ENCODE measurements at regions of chr5 and their contacts with region 1.

Region 1: DNA sequence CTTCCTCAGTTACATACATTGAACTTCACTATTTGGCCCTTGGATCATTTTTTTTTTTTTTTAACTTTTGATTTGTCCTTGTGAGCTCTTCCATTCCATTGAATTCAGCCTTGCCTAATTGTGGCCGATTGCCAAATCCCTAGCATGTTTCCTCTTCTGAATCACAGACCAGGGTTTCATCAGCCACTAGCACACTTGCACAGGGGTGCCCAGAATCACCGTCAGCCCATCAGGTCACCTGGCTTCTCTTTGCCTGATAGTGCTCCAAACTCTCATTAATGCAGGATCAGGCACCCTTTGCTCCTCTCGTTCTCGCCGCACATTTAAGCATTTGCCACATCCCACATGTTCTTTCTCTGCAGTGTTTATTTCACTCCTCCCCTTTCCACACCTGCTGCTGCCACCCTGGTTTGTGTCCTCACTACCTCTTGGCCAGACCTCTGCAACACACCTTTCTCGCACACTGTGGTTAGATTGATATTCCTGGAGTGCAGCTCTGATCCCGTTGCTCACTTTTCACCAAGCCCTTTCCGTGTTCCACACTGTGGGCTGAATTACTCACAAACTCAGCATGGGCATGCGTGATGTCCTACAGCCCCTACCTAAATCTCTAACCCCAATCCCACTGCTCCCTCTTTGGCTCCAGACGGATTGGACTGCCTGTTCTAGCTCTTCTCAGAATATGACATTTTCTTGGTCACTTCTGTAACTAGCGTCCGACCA is 9.8 kb downstream of the PIK3R1 start:
- DNase-seq: no peak
- H3K4me3 ChIP-seq: peak overlapping the region; percentile 22 to 87 (median 26)
- H3K27ac ChIP-seq: peak overlapping the region; percentile 54 to 68 (median 62)
- H3K4me1 ChIP-seq: peaks cover 63 to 100% (median 95%) of the 10 kb centered on the region in 4 donors
- H3K27me3 ChIP-seq: no peaks in the 10 kb centered on the region
- CTCF ChIP-seq: no peak
- EP300 ChIP-seq: no peak
- POLR2A ChIP-seq: no peak

Region 2: GRCh38 chr5:67010684-67011409 is 1214.5 kb before region 1 on chr5:
- intact Hi-C with region 1: loop called (anchors 10 kb)
- DNase-seq: no peak
- H3K4me3 ChIP-seq: peak overlapping the region in 3 of 4 donors; percentile 14 to 25 (median 18)
- H3K27ac ChIP-seq: peak overlapping the region; percentile 67 to 82 (median 72)
- H3K4me1 ChIP-seq: peaks cover 67 to 91% (median 77%) of the 10 kb centered on the region in 4 donors
- H3K27me3 ChIP-seq: no peaks in the 10 kb centered on the region
- CTCF ChIP-seq: no peak
- EP300 ChIP-seq: no peak
- POLR2A ChIP-seq: no peak